ENCODE measurements at regions of chr1 and their contacts with region 1.

Region 1: GRCh38 chr1:17984583-17984982 is 123.0 kb upstream of the IGSF21 start:
- DNase-seq: peak; percentile 27 to 86
- H3K4me3 ChIP-seq: no peak overlapping the region
- H3K27ac ChIP-seq: no peak overlapping the region
- H3K4me1 ChIP-seq: peaks cover 0 to 3% (median 0%) of the 10 kb centered on the region in 4 experiments; a peak in 2 of 7 replicates
- H3K27me3 ChIP-seq: peaks cover 0 to 2% (median 0%) of the 10 kb centered on the region in 4 experiments; a peak in 2 of 7 replicates
- CTCF ChIP-seq: peak; percentile 77 to 93 (median 83)
- EP300 ChIP-seq: no peak
- POLR2A ChIP-seq: no peak
- RAD21 ChIP-seq: peak; percentile 79 to 82

Region 2: GRCh38 chr1:17661546-17662157 is 322.9 kb before region 1 on chr1:
- CTCF ChIA-PET with region 1: no interaction called
- POLR2A ChIA-PET with region 1: no interaction called
- DNase-seq: peak; percentile 10 to 96
- H3K4me3 ChIP-seq: no peak overlapping the region
- H3K27ac ChIP-seq: no peak overlapping the region
- H3K4me1 ChIP-seq: peaks cover 0 to 4% (median 0%) of the 10 kb centered on the region in 4 experiments; a peak in 2 of 7 replicates
- H3K27me3 ChIP-seq: no peaks in the 10 kb centered on the region
- CTCF ChIP-seq: peak; percentile 90 to 94 (median 91)
- EP300 ChIP-seq: no peak
- POLR2A ChIP-seq: no peak
- RAD21 ChIP-seq: peak; percentile 92 to 95

Region 3: GRCh38 chr1:17955302-17956285 is 29.0 kb before region 1 on chr1:
- CTCF ChIA-PET with region 1: interaction called, 10 read pairs
- POLR2A ChIA-PET with region 1: no interaction called
- DNase-seq: no peak
- H3K4me3 ChIP-seq: no peak overlapping the region
- H3K27ac ChIP-seq: no peak overlapping the region
- H3K4me1 ChIP-seq: peaks cover 3 to 10% (median 7%) of the 10 kb centered on the region in 4 experiments
- H3K27me3 ChIP-seq: no peaks in the 10 kb centered on the region; a peak in 2 of 7 replicates
- CTCF ChIP-seq: no peak
- EP300 ChIP-seq: no peak
- POLR2A ChIP-seq: no peak
- RAD21 ChIP-seq: no peak

Region 4: DNA sequence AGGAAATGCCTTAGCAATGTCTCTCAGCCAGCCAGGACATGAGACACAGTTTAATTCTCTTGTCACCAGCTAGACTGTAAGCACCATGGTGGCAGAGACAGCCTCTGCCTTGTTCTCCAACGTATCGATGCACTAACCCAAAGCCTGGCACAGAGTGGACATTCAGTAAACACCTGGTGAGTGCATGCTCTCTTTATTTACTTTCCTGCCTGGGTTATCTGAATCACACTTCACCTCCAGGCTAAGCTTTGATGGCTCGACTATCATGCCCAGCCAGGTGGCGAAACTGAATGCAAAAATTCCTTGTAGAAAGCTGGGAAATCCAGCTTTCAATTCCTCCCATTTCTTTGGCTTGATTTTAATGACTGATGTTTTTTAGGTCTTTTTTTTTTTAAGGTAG is 21.6 kb before region 1 on chr1:
- CTCF ChIA-PET with region 1: interaction called, 19 read pairs
- POLR2A ChIA-PET with region 1: no interaction called
- DNase-seq: no peak
- H3K4me3 ChIP-seq: no peak overlapping the region
- H3K27ac ChIP-seq: no peak overlapping the region
- H3K4me1 ChIP-seq: peaks cover 1 to 5% (median 4%) of the 10 kb centered on the region in 4 experiments; a peak in 6 of 7 replicates
- H3K27me3 ChIP-seq: peaks cover 0 to 4% (median 1%) of the 10 kb centered on the region in 4 experiments; a peak in 3 of 7 replicates
- CTCF ChIP-seq: no peak
- EP300 ChIP-seq: no peak
- POLR2A ChIP-seq: no peak
- RAD21 ChIP-seq: no peak

Region 5: DNA sequence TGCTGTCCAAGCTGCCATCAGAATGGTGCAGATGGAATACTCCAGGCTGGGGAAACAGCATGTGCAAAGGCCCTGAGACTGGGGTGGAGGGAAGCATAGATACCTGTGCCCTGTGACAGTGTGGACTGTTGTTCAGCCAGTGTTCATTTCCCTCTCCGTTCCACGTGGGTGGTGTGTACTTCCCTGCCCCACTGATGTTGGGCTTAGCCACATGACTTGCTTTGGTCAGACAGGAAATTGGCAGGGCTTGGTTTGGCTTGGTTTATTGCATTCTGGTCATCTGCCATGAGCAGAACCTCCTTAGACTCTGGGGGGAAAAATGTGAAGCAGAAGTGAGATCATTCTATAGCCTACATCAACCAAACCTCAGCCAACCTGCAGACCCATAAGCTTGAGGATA is 20.7 kb after region 1 on chr1:
- CTCF ChIA-PET with region 1: interaction called, 13 read pairs
- POLR2A ChIA-PET with region 1: no interaction called
- DNase-seq: no peak
- H3K4me3 ChIP-seq: no peak overlapping the region
- H3K27ac ChIP-seq: no peak overlapping the region
- H3K4me1 ChIP-seq: peaks cover 5 to 10% (median 5%) of the 10 kb centered on the region in 4 experiments
- H3K27me3 ChIP-seq: no peaks in the 10 kb centered on the region; a peak in 2 of 7 replicates
- CTCF ChIP-seq: no peak
- EP300 ChIP-seq: no peak
- POLR2A ChIP-seq: no peak
- RAD21 ChIP-seq: no peak

Region 6: GRCh38 chr1:18100491-18101063 is 116.0 kb after region 1 on chr1:
- CTCF ChIA-PET with region 1: interaction called, 15 read pairs
- POLR2A ChIA-PET with region 1: interaction called, 3 read pairs
- DNase-seq: peak in 1 of 2 experiments; percentile 85
- H3K4me3 ChIP-seq: no peak overlapping the region
- H3K27ac ChIP-seq: no peak overlapping the region
- H3K4me1 ChIP-seq: peaks cover 0 to 5% (median 0%) of the 10 kb centered on the region in 4 experiments; a peak in 1 of 7 replicates
- H3K27me3 ChIP-seq: peaks cover 0 to 18% (median 4%) of the 10 kb centered on the region in 4 experiments; a peak in 4 of 7 replicates
- CTCF ChIP-seq: peak; percentile 55 to 84 (median 70)
- EP300 ChIP-seq: no peak
- POLR2A ChIP-seq: no peak
- RAD21 ChIP-seq: peak; percentile 79 to 87